B cell (primary cell): ENCODE measurements at regions of chr16 and their contacts with region 1.

Region 1: GRCh38 chr16:636206-637080 is at the start of gene METTL26:
- DNase-seq: peak; percentile 96
- ATAC-seq: peak; percentile 81
- H3K4me3 ChIP-seq: peak within 1 kb of the TSS; percentile 84 to 95 (median 87)
- H3K4me3 Mint-ChIP-seq: peak within 1 kb of the TSS; percentile 98
- H3K27ac ChIP-seq: peak within 1 kb of the TSS; percentile 82 to 83
- H3K27ac Mint-ChIP-seq: peak within 1 kb of the TSS; percentile 98
- H3K4me1 ChIP-seq: peaks cover 14 to 43% of the 10 kb centered on the region in 2 donors
- H3K4me1 Mint-ChIP-seq: peaks cover 23% of the 10 kb centered on the region
- H3K27me3 ChIP-seq: no peaks in the 10 kb centered on the region
- H3K27me3 Mint-ChIP-seq: no peaks in the 10 kb centered on the region
- CTCF ChIP-seq: no peak
- total RNA-seq, gene METTL26: 47.2 and 56.6 TPM in 2 replicates

Region 2: DNA sequence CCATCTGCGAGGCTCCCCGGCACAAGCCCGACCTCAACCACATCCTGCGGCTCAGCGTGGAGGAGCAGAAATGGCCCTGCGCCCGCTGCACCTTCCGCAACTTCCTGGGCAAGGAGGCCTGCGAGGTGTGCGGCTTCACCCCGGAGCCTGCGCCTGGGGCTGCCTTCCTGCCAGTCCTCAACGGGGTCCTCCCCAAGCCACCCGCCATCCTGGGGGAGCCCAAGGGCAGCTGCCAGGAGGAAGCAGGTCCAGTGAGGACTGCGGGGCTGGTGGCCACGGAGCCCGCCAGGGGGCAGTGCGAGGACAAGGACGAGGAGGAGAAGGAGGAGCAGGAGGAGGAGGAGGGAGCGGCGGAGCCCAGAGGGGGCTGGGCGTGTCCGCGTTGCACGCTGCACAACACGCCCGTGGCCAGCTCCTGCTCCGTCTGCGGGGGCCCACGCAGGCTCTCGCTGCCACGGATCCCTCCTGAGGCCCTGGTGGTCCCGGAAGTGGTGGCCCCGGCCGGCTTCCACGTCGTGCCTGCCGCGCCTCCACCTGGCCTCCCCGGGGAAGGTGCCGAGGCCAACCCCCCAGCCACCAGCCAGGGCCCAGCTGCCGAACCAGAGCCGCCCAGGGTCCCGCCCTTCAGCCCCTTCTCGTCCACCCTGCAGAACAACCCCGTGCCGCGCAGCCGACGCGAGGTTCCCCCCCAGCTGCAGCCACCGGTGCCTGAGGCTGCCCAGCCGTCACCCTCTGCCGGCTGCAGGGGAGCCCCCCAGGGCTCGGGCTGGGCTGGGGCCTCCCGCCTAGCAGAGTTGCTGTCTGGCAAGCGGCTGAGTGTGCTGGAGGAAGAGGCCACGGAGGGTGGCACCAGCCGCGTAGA is 89.3 kb before region 1 on chr16:
- CTCF ChIA-PET with region 1: no interaction called
- POLR2A ChIA-PET with region 1: no interaction called
- intact Hi-C with region 1: no loop called
- DNase-seq: peak; percentile 52
- ATAC-seq: peak; percentile 75
- H3K4me3 ChIP-seq: peak overlapping the region in 1 of 5 experiments; percentile 17
- H3K4me3 Mint-ChIP-seq: no peak overlapping the region
- H3K27ac ChIP-seq: no peak overlapping the region
- H3K27ac Mint-ChIP-seq: no peak overlapping the region
- H3K4me1 ChIP-seq: no peaks in the 10 kb centered on the region
- H3K4me1 Mint-ChIP-seq: no peaks in the 10 kb centered on the region
- H3K27me3 ChIP-seq: no peaks in the 10 kb centered on the region
- H3K27me3 Mint-ChIP-seq: no peaks in the 10 kb centered on the region
- CTCF ChIP-seq: no peak

Region 3: GRCh38 chr16:589658-590159 is 46.7 kb before region 1 on chr16 and contains the start of gene RAB40C:
- CTCF ChIA-PET with region 1: interaction called, 3 read pairs
- POLR2A ChIA-PET with region 1: interaction called, 3 read pairs
- intact Hi-C with region 1: loop called (anchors 1 kb)
- DNase-seq: peak; percentile 100
- ATAC-seq: peak; percentile 84
- H3K4me3 ChIP-seq: peak within 1 kb of the TSS; percentile 66 to 89 (median 78)
- H3K4me3 Mint-ChIP-seq: peak within 1 kb of the TSS; percentile 94
- H3K27ac ChIP-seq: peak within 1 kb of the TSS; percentile 85 to 88
- H3K27ac Mint-ChIP-seq: peak within 1 kb of the TSS; percentile 99
- H3K4me1 ChIP-seq: peaks cover 14 to 30% of the 10 kb centered on the region in 2 donors
- H3K4me1 Mint-ChIP-seq: peaks cover 50% of the 10 kb centered on the region
- H3K27me3 ChIP-seq: peaks cover 0 to 2% (median 0%) of the 10 kb centered on the region in 4 experiments
- H3K27me3 Mint-ChIP-seq: no peaks in the 10 kb centered on the region
- CTCF ChIP-seq: no peak
- total RNA-seq, gene RAB40C: 25.5 and 26.9 TPM in 2 replicates

Region 4: DNA sequence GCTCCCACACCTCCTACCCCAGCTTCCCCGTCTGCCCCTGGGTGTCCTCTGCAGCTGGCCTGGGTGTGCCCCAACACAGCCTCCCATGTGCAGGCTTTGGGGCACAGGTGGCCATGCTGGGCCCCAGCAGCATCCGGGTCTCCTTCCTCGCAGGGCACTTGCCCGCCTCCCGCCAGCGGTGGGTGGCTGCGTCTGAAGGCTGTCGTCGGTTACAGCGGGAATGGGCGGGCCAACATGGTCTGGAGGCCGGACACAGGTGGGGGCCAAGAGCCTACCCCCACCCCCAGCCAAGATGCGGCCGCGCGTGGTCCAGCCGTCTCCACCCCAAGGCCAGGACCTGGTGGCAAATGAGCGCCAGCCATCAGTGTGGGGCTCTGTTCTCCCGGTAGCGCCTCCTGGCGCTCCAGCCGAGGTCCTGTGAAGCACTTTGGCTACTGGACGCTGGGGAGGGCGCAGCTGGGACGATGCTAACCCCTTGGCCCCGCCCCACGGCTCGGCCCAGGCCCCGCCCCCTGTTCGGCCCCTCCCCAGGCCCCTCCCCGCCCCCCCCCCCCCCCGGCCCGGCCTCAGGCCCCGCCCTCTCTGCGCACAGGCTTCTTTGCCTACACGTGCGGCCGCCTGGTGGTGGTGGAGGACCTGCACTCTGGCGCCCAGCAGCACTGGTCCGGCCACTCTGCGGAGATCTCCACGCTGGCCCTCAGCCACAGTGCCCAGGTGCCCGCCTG is 24.2 kb after region 1 on chr16:
- CTCF ChIA-PET with region 1: interaction called, 6 read pairs
- POLR2A ChIA-PET with region 1: no interaction called
- intact Hi-C with region 1: loop called (anchors 1 kb)
- DNase-seq: peak; percentile 81
- ATAC-seq: peak; percentile 90
- H3K4me3 ChIP-seq: peak overlapping the region in 4 of 5 experiments; percentile 9 to 35 (median 24)
- H3K4me3 Mint-ChIP-seq: peak overlapping the region; percentile 52
- H3K27ac ChIP-seq: peak overlapping the region in 1 of 2 donors; percentile 43
- H3K27ac Mint-ChIP-seq: peak overlapping the region; percentile 56
- H3K4me1 ChIP-seq: peaks cover 10 to 17% of the 10 kb centered on the region in 2 donors
- H3K4me1 Mint-ChIP-seq: peaks cover 10% of the 10 kb centered on the region
- H3K27me3 ChIP-seq: no peaks in the 10 kb centered on the region
- H3K27me3 Mint-ChIP-seq: no peaks in the 10 kb centered on the region
- CTCF ChIP-seq: peak; percentile 57

Region 5: GRCh38 chr16:667780-668518 is 31.5 kb after region 1 on chr16 and contains the start of gene RHOT2:
- CTCF ChIA-PET with region 1: no interaction called
- POLR2A ChIA-PET with region 1: interaction called, 3 read pairs
- intact Hi-C with region 1: loop called (anchors 1 kb)
- DNase-seq: peak; percentile 95
- ATAC-seq: peak; percentile 99
- H3K4me3 ChIP-seq: peak within 1 kb of the TSS; percentile 23 to 84 (median 73)
- H3K4me3 Mint-ChIP-seq: peak within 1 kb of the TSS; percentile 86
- H3K27ac ChIP-seq: peak within 1 kb of the TSS; percentile 41 to 79
- H3K27ac Mint-ChIP-seq: peak within 1 kb of the TSS; percentile 92
- H3K4me1 ChIP-seq: peaks cover 15 to 25% of the 10 kb centered on the region in 2 donors
- H3K4me1 Mint-ChIP-seq: peaks cover 12% of the 10 kb centered on the region
- H3K27me3 ChIP-seq: no peaks in the 10 kb centered on the region
- H3K27me3 Mint-ChIP-seq: no peaks in the 10 kb centered on the region
- CTCF ChIP-seq: peak; percentile 79
- total RNA-seq, gene RHOT2: 207 and 215 TPM in 2 replicates

Region 6: DNA sequence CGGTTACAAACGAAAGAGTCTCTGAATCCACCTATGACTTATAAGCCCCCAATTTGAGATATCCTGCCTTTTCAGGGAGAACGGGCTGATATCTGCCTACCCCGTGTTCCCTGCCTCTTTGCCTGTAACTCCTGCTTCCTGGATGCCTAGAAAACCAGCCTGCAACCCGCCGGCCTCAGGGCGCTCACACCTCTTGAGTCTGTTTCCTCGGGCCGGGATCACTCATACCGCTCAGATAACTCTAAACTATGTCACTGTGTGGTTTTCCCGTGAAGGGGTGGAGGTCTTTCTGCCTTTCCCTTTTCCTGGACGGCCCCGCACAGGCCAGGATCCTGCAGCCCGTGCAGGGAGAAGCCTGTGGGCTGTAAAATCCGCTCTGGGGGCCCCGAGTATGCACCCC is 141.4 kb after region 1 on chr16:
- CTCF ChIA-PET with region 1: no interaction called
- POLR2A ChIA-PET with region 1: no interaction called
- intact Hi-C with region 1: no loop called
- DNase-seq: no peak
- ATAC-seq: no peak
- H3K4me3 ChIP-seq: no peak overlapping the region
- H3K4me3 Mint-ChIP-seq: no peak overlapping the region
- H3K27ac ChIP-seq: no peak overlapping the region
- H3K27ac Mint-ChIP-seq: no peak overlapping the region
- H3K4me1 ChIP-seq: no peaks in the 10 kb centered on the region
- H3K4me1 Mint-ChIP-seq: no peaks in the 10 kb centered on the region
- H3K27me3 ChIP-seq: peaks cover 0 to 23% (median 5%) of the 10 kb centered on the region in 4 experiments
- H3K27me3 Mint-ChIP-seq: peaks cover 4% of the 10 kb centered on the region
- CTCF ChIP-seq: no peak